MCF 10A (cell line): ENCODE measurements at regions of chr3 and their contacts with region 1.

Region 1: DNA sequence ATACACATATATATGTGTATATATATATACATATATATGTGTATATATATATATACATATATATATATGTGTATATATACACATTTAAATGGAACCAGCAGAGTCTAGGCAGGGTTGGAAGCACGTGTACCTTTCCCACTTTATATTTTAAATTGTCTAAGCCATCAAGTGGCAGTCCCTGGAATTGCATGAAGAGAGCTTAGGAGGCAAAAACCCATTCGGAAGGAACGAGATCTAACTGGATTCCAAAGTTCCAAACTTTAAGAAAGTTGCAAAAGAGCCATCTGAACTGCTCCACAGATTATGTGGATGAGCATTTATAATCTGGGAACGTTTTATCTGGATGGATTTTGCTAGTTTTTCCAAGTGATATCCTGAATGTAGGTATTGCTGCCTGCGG is 186.5 kb downstream of the FOXP1 start:
- DNase-seq: peak; percentile 59
- H3K4me3 Mint-ChIP-seq: no peak overlapping the region
- H3K27ac Mint-ChIP-seq: no peak overlapping the region
- H3K4me1 Mint-ChIP-seq: peaks cover 31% of the 10 kb centered on the region
- H3K27me3 Mint-ChIP-seq: no peaks in the 10 kb centered on the region
- CTCF ChIP-seq: peak; percentile 50

Region 2: GRCh38 chr3:71369701-71370391 is 27.2 kb before region 1 on chr3:
- CTCF ChIA-PET with region 1: interaction called, 10 read pairs
- POLR2A ChIA-PET with region 1: interaction called, 4 read pairs
- intact Hi-C with region 1: no loop called
- DNase-seq: peak; percentile 11
- H3K4me3 Mint-ChIP-seq: no peak overlapping the region
- H3K27ac Mint-ChIP-seq: peak overlapping the region; percentile 72
- H3K4me1 Mint-ChIP-seq: peaks cover 30% of the 10 kb centered on the region
- H3K27me3 Mint-ChIP-seq: no peaks in the 10 kb centered on the region
- CTCF ChIP-seq: no peak